Panc1 (cell line): ENCODE measurements at regions of chr11 and their contacts with region 1.

Region 1: DNA sequence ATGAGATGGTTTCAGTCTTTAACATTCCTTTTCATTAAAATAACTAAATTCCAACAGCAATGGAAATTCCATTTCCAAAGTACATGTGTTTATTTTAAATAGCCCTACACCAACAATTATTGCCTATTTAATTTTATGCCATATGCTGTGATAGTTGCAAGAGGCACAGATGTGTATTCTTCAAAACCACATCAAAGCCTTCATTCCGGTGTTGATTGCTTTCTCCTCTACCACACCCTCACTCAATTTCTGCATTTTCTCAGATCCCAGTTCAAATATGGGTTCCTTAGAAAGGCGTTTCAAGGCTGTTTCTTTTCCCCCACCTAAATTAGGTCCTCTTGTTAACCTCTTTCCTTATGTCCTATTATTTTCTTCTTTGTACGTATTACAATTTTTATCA is 6.0 kb upstream of the HSD17B12 start:
- DNase-seq: no peak
- ATAC-seq: no peak
- H3K4me3 ChIP-seq: no peak overlapping the region
- H3K27ac ChIP-seq: no peak overlapping the region
- H3K4me1 ChIP-seq: no peaks in the 10 kb centered on the region
- H3K27me3 ChIP-seq: peaks cover 2% of the 10 kb centered on the region; the same call in 1 of the 2 replicates
- CTCF ChIP-seq: no peak

Region 2: DNA sequence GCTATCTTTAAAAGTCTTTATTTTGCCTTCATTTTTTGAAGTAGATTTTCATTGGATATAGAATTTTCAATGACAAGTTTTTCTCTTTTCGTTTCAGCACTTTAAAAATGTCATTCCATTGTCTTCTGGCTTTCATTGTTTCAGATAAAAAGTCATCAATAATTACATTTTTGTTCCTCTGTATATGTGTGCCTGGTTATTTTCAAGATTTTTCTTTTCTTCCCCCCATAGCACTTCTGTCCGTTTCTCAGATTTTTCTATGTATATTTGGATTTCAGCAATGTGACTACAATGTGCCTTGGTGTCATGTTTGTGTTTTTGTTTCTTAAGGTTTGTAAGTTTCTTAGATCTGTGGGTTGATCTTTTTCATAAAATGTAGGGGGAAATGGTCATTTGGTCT is 60.3 kb before region 1 on chr11:
- CTCF ChIA-PET with region 1: no interaction called
- POLR2A ChIA-PET with region 1: interaction called, 18 read pairs
- in situ Hi-C with region 1: no loop called
- intact Hi-C with region 1: no loop called
- DNase-seq: no peak
- ATAC-seq: no peak
- H3K4me3 ChIP-seq: no peak overlapping the region
- H3K27ac ChIP-seq: no peak overlapping the region
- H3K4me1 ChIP-seq: no peaks in the 10 kb centered on the region
- H3K27me3 ChIP-seq: no peaks in the 10 kb centered on the region
- CTCF ChIP-seq: no peak

Region 3: GRCh38 chr11:43830928-43831440 is 156.4 kb after region 1 on chr11:
- CTCF ChIA-PET with region 1: no interaction called
- POLR2A ChIA-PET with region 1: no interaction called
- in situ Hi-C with region 1: no loop called
- intact Hi-C with region 1: no loop called
- DNase-seq: peak; percentile 97
- ATAC-seq: peak; percentile 99
- H3K4me3 ChIP-seq: no peak overlapping the region
- H3K27ac ChIP-seq: no peak overlapping the region
- H3K4me1 ChIP-seq: peaks cover 7% of the 10 kb centered on the region; the same call in 1 of the 2 replicates
- H3K27me3 ChIP-seq: no peaks in the 10 kb centered on the region
- CTCF ChIP-seq: no peak